ENCODE measurements at regions of chr3 and their contacts with region 1.

Region 1: GRCh38 chr3:12473511-12473910 is 10.8 kb upstream of the TSEN2 start:
- DNase-seq: no peak
- ATAC-seq: no peak
- H3K4me3 ChIP-seq: no peak overlapping the region
- H3K27ac ChIP-seq: no peak overlapping the region
- H3K4me1 ChIP-seq: peaks cover 8% of the 10 kb centered on the region
- H3K27me3 ChIP-seq: no peaks in the 10 kb centered on the region
- CTCF ChIP-seq: no peak
- POLR2A ChIP-seq: no peak
- RAD21 ChIP-seq: no peak

Region 2: GRCh38 chr3:12438291-12438690 is 35.2 kb before region 1 on chr3:
- CTCF ChIA-PET with region 1: no interaction called
- POLR2A ChIA-PET with region 1: no interaction called
- dilution Hi-C with region 1: no loop called
- in situ Hi-C with region 1: no loop called
- intact Hi-C with region 1: loop called (anchors 1 kb)
- DNase-seq: no peak
- ATAC-seq: no peak
- H3K4me3 ChIP-seq: no peak overlapping the region
- H3K27ac ChIP-seq: no peak overlapping the region
- H3K4me1 ChIP-seq: peaks cover 9% of the 10 kb centered on the region
- H3K27me3 ChIP-seq: 0 out of 2 replicates have a peak, but pooled peaks cover 2% of the 10 kb centered on the region
- CTCF ChIP-seq: no peak
- POLR2A ChIP-seq: no peak
- RAD21 ChIP-seq: no peak